Heart right ventricle (tissue), 16 donors: ENCODE measurements at regions of chr7 and their contacts with region 1.

Region 1: DNA sequence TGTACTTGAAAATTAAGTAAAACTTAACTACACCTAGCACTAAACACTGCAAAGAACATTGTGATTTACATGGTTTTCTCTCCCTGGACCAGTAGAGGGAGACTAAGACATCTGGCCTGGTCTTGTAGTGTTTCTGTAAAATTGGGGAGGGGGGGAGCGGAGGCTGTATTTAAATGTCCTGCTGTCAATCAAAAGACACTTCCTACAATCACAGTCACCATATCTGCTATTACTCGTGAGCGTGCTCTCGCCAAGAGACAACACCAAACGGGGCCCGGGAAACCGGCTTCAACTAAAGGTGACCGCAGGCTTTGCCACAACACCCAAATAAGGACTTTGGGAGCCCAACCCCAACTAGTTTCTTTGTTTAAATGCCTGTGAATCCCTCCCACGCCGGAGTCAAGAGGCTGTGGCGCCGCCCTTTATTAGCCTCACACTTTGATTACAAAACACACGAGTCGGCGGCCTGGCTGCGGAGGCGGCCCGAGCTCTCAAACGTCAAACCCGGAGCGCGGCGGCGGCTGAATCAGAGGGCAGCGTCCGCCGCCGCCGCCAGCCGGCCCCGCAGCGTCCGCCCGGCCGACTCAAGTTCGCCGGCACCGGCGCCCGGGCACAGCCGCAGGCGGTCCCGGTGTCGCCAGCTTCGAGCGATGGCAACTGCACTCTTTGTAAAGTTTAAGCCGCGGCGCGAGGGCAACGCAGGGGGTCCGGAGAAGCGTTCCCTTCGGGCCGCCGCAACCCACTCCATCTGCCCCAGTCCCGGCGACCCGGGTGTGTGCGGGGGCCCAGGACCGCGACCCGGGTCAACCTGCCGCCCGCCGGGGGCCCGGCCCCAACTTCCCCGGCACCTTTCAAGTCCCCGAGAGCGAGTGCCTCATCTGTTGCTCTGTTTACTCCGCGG is 1.3 kb downstream of the KDM7A start:
- DNase-seq: peak; percentile 88 to 92
- ATAC-seq: peak; percentile 57 to 89 (median 86)
- H3K4me3 ChIP-seq: peak overlapping the region; percentile 61 to 98 (median 92)
- H3K27ac ChIP-seq: peak overlapping the region; percentile 94 to 100 (median 99)
- H3K4me1 ChIP-seq: peaks cover 0 to 50% (median 29%) of the 10 kb centered on the region in 9 donors
- H3K27me3 ChIP-seq: peaks cover 0 to 3% (median 0%) of the 10 kb centered on the region in 7 donors
- CTCF ChIP-seq: peak; percentile 64 to 88 (median 72)

Region 2: GRCh38 chr7:139242741-139243281 is 932.7 kb before region 1 on chr7:
- intact Hi-C with region 1: no loop called
- DNase-seq: no peak
- ATAC-seq: no peak
- H3K4me3 ChIP-seq: no peak overlapping the region
- H3K27ac ChIP-seq: peak overlapping the region in 1 of 10 donors; percentile 0
- H3K4me1 ChIP-seq: peaks cover 0 to 18% (median 10%) of the 10 kb centered on the region in 9 donors
- H3K27me3 ChIP-seq: no peaks in the 10 kb centered on the region
- CTCF ChIP-seq: no peak

Region 3: DNA sequence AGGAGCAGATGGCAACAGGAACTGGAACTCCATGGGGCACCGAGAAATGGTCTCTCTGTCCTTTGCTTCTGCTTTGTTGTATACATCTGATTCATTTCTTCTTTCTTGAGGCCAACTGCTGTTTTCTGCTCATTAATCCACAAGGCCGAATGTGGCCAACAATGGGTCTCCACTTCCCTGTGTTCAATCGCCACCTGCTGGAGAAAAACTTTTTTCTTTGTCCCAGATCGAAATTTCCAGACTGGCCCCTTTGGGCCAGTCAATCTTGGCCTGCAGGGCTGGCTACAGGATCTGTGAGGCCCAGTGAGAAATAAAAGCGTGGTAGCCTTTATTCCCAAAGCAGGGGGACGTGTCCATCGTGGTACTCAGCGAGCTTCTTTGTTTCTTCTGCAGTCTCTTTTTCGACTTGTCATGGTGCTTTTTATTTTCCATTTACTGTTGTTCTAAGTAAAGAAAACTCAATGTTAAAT is 171.5 kb before region 1 on chr7:
- intact Hi-C with region 1: no loop called
- DNase-seq: no peak
- ATAC-seq: no peak
- H3K4me3 ChIP-seq: no peak overlapping the region
- H3K27ac ChIP-seq: no peak overlapping the region
- H3K4me1 ChIP-seq: no peaks in the 10 kb centered on the region
- H3K27me3 ChIP-seq: no peaks in the 10 kb centered on the region
- CTCF ChIP-seq: peak in 8 of 9 donors; percentile 11 to 58 (median 45)

Region 4: GRCh38 chr7:140230861-140231770 is 55.6 kb after region 1 on chr7:
- intact Hi-C with region 1: loop called in 5 of 10 experiments (anchors 5 kb)
- DNase-seq: peak; percentile 34 to 39
- ATAC-seq: peak; percentile 48 to 79 (median 65)
- H3K4me3 ChIP-seq: peak overlapping the region in 9 of 10 donors; percentile 39 to 67 (median 62)
- H3K27ac ChIP-seq: peak overlapping the region in 9 of 10 donors; percentile 19 to 91 (median 65)
- H3K4me1 ChIP-seq: peaks cover 0 to 36% (median 15%) of the 10 kb centered on the region in 9 donors
- H3K27me3 ChIP-seq: peaks cover 0 to 10% (median 3%) of the 10 kb centered on the region in 7 donors
- CTCF ChIP-seq: peak in 3 of 9 donors; percentile 7 to 16 (median 13)

Region 5: DNA sequence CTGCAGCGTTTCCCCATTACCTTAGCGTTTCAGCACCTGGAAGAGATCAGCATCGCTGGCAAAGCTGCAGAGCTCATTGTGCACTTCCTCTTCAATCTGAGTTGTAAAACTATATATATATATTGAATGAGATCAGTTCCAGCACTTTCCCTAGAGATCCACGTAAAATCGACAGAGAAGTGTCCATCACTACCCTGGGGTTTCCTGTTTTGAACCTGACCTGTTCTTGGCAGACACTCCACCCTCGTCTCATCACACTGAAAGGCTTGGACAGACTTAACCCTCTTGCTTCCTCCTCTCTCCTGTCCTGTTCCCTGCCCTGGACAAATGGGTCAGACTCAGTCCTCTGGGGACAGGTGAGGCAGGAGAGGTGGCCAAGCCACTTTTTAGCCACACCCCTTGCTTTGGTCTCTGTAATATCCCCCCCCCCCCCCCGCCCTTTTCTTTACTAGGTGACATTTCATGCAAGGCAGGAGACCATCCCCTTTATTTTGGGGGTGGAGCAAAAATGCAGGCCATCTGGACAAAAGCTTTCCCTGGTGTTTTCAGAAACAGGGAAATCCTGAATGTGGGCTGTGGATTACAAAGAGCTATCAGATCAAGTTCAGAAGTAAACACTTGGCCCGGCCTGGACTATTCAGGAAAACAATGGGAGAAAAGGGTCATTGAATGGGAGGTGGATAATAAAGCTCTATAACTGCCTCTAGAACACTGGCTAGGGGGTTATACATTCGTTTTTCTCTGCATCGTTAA is 85.1 kb after region 1 on chr7:
- intact Hi-C with region 1: loop called in 1 of 10 experiments (anchors 1 kb)
- DNase-seq: peak in 1 of 2 donors; percentile 14
- ATAC-seq: peak; percentile 37 to 91 (median 78)
- H3K4me3 ChIP-seq: peak overlapping the region in 4 of 10 donors; percentile 0 to 35 (median 8)
- H3K27ac ChIP-seq: peak overlapping the region in 6 of 10 donors; percentile 31 to 66 (median 47)
- H3K4me1 ChIP-seq: peaks cover 0 to 22% (median 5%) of the 10 kb centered on the region in 9 donors
- H3K27me3 ChIP-seq: peaks cover 0 to 3% (median 0%) of the 10 kb centered on the region in 7 donors
- CTCF ChIP-seq: no peak

Region 6: DNA sequence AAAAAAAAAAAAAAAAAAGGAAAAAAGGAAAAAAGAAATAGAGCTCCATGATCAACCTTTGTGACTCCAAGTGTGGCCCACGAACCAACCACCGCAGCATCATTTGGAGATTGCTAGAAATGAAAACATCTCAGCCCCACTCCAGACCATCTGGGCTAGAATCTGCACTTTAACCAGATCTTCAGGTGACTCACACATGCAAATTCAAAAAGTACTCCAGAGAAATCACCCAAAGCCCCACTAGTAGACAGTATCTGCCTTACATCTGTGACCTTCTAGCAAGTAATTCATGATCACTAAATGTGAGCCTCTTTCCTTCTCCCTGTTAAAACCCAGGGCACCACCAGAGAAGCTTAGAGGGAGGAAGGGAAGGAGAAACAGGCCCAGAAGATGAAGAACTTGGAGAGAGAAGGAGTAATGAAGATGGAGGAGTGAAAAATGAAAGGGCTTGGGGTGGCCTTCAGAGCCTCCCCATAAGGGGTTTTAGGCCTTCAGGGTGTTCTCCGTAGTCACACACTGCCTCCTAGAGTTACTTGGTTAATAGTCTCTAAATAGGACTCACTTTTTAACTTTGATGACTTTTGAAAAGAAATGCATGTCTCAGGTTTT is 128.8 kb after region 1 on chr7:
- intact Hi-C with region 1: loop called in 6 of 10 experiments (anchors 2 to 10 kb)
- DNase-seq: no peak
- ATAC-seq: peak in 7 of 8 donors; percentile 59 to 83 (median 77)
- H3K4me3 ChIP-seq: no peak overlapping the region
- H3K27ac ChIP-seq: no peak overlapping the region
- H3K4me1 ChIP-seq: peaks cover 0 to 17% (median 0%) of the 10 kb centered on the region in 9 donors
- H3K27me3 ChIP-seq: no peaks in the 10 kb centered on the region
- CTCF ChIP-seq: peak; percentile 16 to 68 (median 54)

Region 7: DNA sequence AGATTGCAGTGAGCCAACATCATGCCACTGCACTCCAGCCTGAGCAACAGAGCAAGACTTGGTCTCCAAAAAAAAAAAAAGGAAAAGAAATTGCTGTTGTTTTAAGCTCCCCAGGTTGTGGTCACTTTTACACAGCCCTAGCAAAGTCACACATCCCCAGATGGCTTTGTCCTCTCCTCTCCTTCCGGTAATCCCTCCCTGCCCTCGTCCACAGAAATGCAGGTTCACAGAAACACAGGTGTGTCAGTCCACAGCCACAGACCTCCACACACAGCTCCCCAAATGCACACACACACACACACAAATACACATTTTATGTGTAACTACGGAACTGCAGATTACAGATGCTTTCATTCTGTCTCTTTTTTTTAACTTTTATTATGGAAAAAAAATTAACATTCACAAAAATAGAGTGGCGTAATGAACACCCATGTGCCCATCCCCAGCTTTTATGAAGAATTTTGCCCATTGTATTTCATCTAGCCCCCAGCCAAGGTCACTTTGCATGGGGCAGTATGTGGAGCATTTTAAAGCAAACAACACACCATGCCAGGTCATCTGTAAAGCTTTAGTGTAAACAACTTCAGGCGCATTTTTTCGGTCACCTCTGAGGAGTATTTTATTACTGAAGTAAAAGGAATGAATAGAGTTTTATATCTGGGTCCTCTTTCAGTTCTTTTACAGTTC is 134.7 kb after region 1 on chr7:
- intact Hi-C with region 1: loop called in 5 of 10 experiments (anchors 5 to 10 kb)
- DNase-seq: no peak
- ATAC-seq: no peak
- H3K4me3 ChIP-seq: no peak overlapping the region
- H3K27ac ChIP-seq: no peak overlapping the region
- H3K4me1 ChIP-seq: peaks cover 0 to 40% (median 0%) of the 10 kb centered on the region in 9 donors
- H3K27me3 ChIP-seq: no peaks in the 10 kb centered on the region
- CTCF ChIP-seq: no peak

Region 8: DNA sequence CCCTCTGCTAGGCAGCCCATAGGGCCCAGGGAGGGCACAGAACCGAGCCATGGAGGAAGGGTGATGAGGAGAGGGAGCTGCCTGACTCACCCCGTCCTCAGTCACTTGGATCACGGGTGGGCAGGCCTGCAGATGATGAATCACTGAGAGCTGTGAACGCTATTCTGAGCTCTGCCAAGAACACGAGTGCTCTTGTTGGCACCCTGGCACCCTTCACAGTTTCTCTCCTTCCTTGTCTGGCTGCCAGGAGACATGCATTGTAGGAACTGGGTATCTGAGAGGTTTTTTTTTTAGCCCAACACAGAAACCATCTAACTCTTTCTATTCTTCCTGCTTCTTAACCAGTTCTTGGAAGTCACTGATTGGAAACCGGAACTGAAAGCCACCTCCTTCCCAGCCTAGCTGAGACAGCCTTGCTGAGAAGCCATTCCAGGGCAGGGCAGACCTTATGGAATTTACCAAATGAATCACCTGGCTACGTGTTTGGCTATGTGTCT is 140.7 kb after region 1 on chr7:
- intact Hi-C with region 1: loop called in 2 of 10 experiments (anchors 5 to 10 kb)
- DNase-seq: peak; percentile 40 to 53
- ATAC-seq: peak; percentile 79 to 99 (median 86)
- H3K4me3 ChIP-seq: peak overlapping the region in 7 of 10 donors; percentile 19 to 34 (median 30)
- H3K27ac ChIP-seq: peak overlapping the region in 5 of 10 donors; percentile 25 to 74 (median 36)
- H3K4me1 ChIP-seq: peaks cover 0 to 63% (median 13%) of the 10 kb centered on the region in 9 donors
- H3K27me3 ChIP-seq: no peaks in the 10 kb centered on the region
- CTCF ChIP-seq: no peak

Region 9: GRCh38 chr7:140326116-140326928 is 150.9 kb after region 1 on chr7:
- intact Hi-C with region 1: loop called in 7 of 10 experiments (anchors 1 to 5 kb)
- DNase-seq: peak; percentile 31 to 71
- ATAC-seq: peak; percentile 79 to 95 (median 90)
- H3K4me3 ChIP-seq: peak overlapping the region in 6 of 10 donors; percentile 2 to 27 (median 24)
- H3K27ac ChIP-seq: peak overlapping the region in 1 of 10 donors; percentile 0
- H3K4me1 ChIP-seq: peaks cover 0 to 17% (median 13%) of the 10 kb centered on the region in 9 donors
- H3K27me3 ChIP-seq: no peaks in the 10 kb centered on the region
- CTCF ChIP-seq: peak; percentile 35 to 82 (median 73)